ENCODE measurements at regions of chr10 and their contacts with region 1.

Region 1: GRCh38 chr10:79298403-79299244 is 48.6 kb upstream of the PPIF start:
- DNase-seq: peak; percentile 91
- H3K4me3 ChIP-seq: no peak overlapping the region
- H3K27ac ChIP-seq: peak overlapping the region; percentile 98
- H3K27me3 ChIP-seq: no peaks in the 10 kb centered on the region
- CTCF ChIP-seq: no peak

Region 2: GRCh38 chr10:79310911-79311573 is 12.4 kb after region 1 on chr10:
- CTCF ChIA-PET with region 1: no interaction called
- POLR2A ChIA-PET with region 1: interaction called, 17 read pairs
- DNase-seq: no peak
- H3K4me3 ChIP-seq: no peak overlapping the region
- H3K27ac ChIP-seq: no peak overlapping the region
- H3K27me3 ChIP-seq: no peaks in the 10 kb centered on the region
- CTCF ChIP-seq: no peak

Region 3: DNA sequence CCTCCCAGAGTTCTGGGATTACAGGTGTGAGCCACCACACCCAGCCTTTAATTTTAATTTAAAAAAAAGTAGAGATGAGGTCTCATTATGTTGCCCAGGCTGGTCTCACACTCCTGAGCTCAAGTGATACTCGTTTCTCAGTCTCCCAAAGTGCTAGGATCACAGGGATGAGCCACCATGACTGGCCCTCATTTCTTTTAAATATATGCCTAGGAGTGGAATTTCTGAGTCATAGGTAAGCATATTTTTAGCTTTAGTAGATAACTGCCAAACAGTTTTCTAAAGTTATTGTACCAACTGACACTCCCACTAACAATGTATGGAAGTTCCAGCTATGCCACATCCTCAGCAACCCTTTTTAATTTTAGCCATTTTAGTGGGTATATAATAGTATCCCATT is 34.9 kb after region 1 on chr10:
- CTCF ChIA-PET with region 1: no interaction called
- POLR2A ChIA-PET with region 1: interaction called, 10 read pairs
- DNase-seq: peak; percentile 29
- H3K4me3 ChIP-seq: no peak overlapping the region
- H3K27ac ChIP-seq: peak overlapping the region; percentile 22
- H3K27me3 ChIP-seq: no peaks in the 10 kb centered on the region
- CTCF ChIP-seq: no peak

Region 4: DNA sequence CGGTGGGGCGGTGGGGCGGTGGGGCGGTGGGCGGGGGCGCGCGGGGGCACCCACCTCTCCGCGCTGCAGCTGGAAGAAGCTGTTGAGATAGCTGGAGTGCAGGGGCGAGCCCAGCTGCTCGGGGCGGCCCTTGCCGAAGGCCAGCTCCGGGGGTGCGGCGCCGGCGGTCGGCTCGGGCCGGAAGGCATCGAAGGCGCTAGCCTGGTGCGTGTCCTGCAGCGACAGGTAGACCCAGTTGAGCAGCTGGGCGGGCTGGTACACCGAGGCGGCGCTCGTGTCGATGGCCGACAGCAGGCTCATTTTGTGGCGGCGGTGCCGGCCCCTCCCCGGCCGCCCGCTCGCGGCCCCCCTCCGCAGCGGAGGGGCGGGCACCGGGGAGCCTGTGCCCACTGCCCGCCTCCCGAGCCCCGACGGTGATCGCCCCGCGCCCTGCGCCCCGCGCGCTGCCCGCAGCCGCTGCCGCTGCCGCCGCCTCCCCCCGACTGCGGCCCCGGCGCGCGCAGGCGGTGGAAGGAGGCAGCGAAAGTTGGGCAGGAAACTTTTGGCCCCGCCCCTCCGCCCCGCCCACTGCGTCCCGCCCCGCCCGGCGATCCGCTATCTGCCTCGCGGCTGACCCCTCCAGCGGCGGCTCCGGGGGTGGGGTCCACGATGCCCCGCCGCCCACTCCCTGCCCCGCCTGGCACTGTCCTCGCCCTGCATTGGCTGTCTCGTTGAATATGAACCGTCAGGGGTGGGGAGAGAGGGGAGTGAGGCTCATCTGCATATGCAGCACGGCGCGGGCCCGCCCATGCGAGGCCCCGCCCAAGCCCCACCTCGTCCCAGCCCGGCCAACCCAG is 146.7 kb after region 1 on chr10 and contains the start of gene ZCCHC24:
- CTCF ChIA-PET with region 1: no interaction called
- POLR2A ChIA-PET with region 1: no interaction called
- DNase-seq: peak; percentile 97
- H3K4me3 ChIP-seq: peak within 1 kb of the TSS; percentile 90
- H3K27ac ChIP-seq: peak within 1 kb of the TSS; percentile 90
- H3K27me3 ChIP-seq: no peaks in the 10 kb centered on the region
- CTCF ChIP-seq: no peak
- polyA plus RNA-seq, gene ZCCHC24: 37.4 and 46.0 TPM in 2 replicates